PC-3 (cell line): ENCODE measurements at regions of chr21 and their contacts with region 1.

Region 1: DNA sequence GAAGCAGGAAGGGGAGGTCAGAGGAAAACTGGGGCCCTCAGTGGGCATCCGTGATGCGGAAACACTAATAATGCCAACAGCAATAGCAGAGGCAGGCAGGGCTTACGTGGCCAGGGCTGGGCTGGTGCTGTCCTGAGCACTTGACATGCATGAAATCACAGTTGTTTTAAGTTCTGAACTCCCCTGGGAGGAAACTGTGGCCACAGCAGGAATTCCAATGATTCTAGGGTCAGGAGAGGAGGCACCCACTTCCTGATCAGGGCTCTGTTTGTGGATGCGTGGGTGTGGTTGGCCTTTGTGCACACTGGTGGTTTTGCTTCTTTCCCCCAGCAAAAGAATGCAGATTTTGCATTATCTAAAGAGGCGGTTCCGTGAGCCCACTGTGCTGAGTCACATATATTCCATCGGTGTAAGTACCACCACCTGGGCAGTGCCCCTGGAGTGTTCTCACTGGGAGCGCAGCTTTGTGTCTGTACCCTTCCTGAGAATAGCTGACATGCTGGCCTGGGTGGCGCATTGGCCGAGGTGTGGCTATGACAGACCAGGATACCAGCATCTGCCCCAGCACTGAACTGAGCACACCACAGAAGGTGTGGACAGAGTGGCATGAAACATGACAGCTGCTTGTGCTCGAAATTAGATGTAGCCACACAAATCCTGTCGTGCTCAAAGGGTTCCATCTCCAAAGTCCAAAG is 71.0 kb downstream of the PDE9A start:
- DNase-seq: peak; percentile 96
- ATAC-seq: peak; percentile 89
- H3K4me3 ChIP-seq: no peak overlapping the region
- H3K27ac ChIP-seq: peak overlapping the region; percentile 85
- H3K4me1 ChIP-seq: peaks cover 37% of the 10 kb centered on the region
- H3K27me3 ChIP-seq: no peaks in the 10 kb centered on the region
- CTCF ChIP-seq: no peak

Region 2: GRCh38 chr21:42593007-42593806 is 131.2 kb before region 1 on chr21:
- CTCF ChIA-PET with region 1: no interaction called
- POLR2A ChIA-PET with region 1: no interaction called
- intact Hi-C with region 1: loop called (anchors 5 kb)
- DNase-seq: peak; percentile 77
- ATAC-seq: peak; percentile 99
- H3K4me3 ChIP-seq: peak overlapping the region; percentile 51; the same call in 1 of the 2 replicates
- H3K27ac ChIP-seq: no peak overlapping the region
- H3K4me1 ChIP-seq: peaks cover 4% of the 10 kb centered on the region; the same call in 1 of the 2 replicates
- H3K27me3 ChIP-seq: peaks cover 11% of the 10 kb centered on the region; the same call in 1 of the 2 replicates
- CTCF ChIP-seq: peak; percentile 79

Region 3: GRCh38 chr21:42677339-42678321 is 46.7 kb before region 1 on chr21:
- CTCF ChIA-PET with region 1: no interaction called
- POLR2A ChIA-PET with region 1: no interaction called
- intact Hi-C with region 1: loop called (anchors 2 kb)
- DNase-seq: peak; percentile 62
- ATAC-seq: no peak
- H3K4me3 ChIP-seq: no peak overlapping the region
- H3K27ac ChIP-seq: no peak overlapping the region
- H3K4me1 ChIP-seq: peaks cover 15% of the 10 kb centered on the region
- H3K27me3 ChIP-seq: peaks cover 66% of the 10 kb centered on the region
- CTCF ChIP-seq: no peak

Region 4: GRCh38 chr21:44736291-44737004 is 2012.1 kb after region 1 on chr21:
- CTCF ChIA-PET with region 1: no interaction called
- POLR2A ChIA-PET with region 1: no interaction called
- intact Hi-C with region 1: no loop called
- DNase-seq: peak; percentile 93
- ATAC-seq: peak; percentile 77
- H3K4me3 ChIP-seq: no peak overlapping the region
- H3K27ac ChIP-seq: peak overlapping the region; percentile 67
- H3K4me1 ChIP-seq: peaks cover 24% of the 10 kb centered on the region
- H3K27me3 ChIP-seq: no peaks in the 10 kb centered on the region
- CTCF ChIP-seq: no peak